ENCODE measurements at regions of chr2 and their contacts with region 1.

Region 1: GRCh38 chr2:106582148-106583143 is 95.3 kb downstream of the CD8B2 start:
- DNase-seq: peak; percentile 66
- ATAC-seq: peak; percentile 99
- H3K4me3 ChIP-seq: peak overlapping the region; percentile 43 to 52
- H3K27ac ChIP-seq: no peak overlapping the region
- H3K4me1 ChIP-seq: peaks cover 3 to 11% of the 10 kb centered on the region in 2 experiments; a peak in 3 of 4 replicates
- H3K27me3 ChIP-seq: 0 out of 2 replicates have a peak, but pooled peaks cover 5% of the 10 kb centered on the region
- CTCF ChIP-seq: peak; percentile 78 to 90 (median 84)
- POLR2A ChIP-seq: no peak
- RAD21 ChIP-seq: peak; percentile 89

Region 2: GRCh38 chr2:105287692-105288091 is 1294.8 kb before region 1 on chr2:
- CTCF ChIA-PET with region 1: no interaction called
- POLR2A ChIA-PET with region 1: no interaction called
- RAD21 ChIA-PET with region 1: no interaction called
- intact Hi-C with region 1: loop called (anchors 5 kb)
- DNase-seq: peak; percentile 16
- ATAC-seq: peak; percentile 74
- H3K4me3 ChIP-seq: no peak overlapping the region
- H3K27ac ChIP-seq: no peak overlapping the region
- H3K4me1 ChIP-seq: no peaks in the 10 kb centered on the region
- H3K27me3 ChIP-seq: no peaks in the 10 kb centered on the region
- CTCF ChIP-seq: peak; percentile 42 to 65 (median 61); a peak in 5 of 6 replicates
- POLR2A ChIP-seq: no peak
- RAD21 ChIP-seq: peak; percentile 51

Region 3: GRCh38 chr2:105919826-105920225 is 662.6 kb before region 1 on chr2:
- CTCF ChIA-PET with region 1: no interaction called
- POLR2A ChIA-PET with region 1: no interaction called
- RAD21 ChIA-PET with region 1: interaction called in 1 of 2 experiments, 4 read pairs
- intact Hi-C with region 1: loop called (anchors 10 kb)
- DNase-seq: peak; percentile 62
- ATAC-seq: peak; percentile 64
- H3K4me3 ChIP-seq: peak overlapping the region in 1 of 2 experiments; percentile 32; a peak in 1 of 4 replicates
- H3K27ac ChIP-seq: peak overlapping the region; percentile 76
- H3K4me1 ChIP-seq: peaks cover 21 to 39% of the 10 kb centered on the region in 2 experiments
- H3K27me3 ChIP-seq: no peaks in the 10 kb centered on the region
- CTCF ChIP-seq: peak; percentile 44 to 87 (median 85); a peak in 5 of 6 replicates
- POLR2A ChIP-seq: no peak
- RAD21 ChIP-seq: peak; percentile 46

Region 4: DNA sequence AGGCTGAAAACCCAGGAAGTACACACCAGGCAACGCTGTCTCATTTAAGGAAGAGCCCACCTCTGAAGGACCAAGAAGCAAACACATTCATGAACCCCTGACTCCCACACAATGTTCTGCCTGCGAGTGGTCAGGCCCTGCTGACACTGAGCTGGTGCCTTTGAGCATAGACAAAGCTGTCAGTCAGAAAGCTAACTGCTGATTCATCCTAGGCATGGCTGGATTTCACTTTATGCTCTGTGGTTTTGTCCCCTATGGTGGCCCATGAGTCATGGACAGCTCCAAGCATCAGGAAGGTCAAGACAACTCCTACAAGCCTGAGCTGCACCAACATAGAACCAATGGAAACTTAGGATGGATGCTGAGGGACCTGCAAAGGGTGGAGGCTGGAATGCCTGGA is 467.2 kb before region 1 on chr2:
- CTCF ChIA-PET with region 1: no interaction called
- POLR2A ChIA-PET with region 1: no interaction called
- RAD21 ChIA-PET with region 1: no interaction called
- intact Hi-C with region 1: loop called (anchors 5 kb)
- DNase-seq: peak; percentile 86
- ATAC-seq: peak; percentile 92
- H3K4me3 ChIP-seq: peak overlapping the region in 1 of 2 experiments; percentile 20; a peak in 1 of 4 replicates
- H3K27ac ChIP-seq: peak overlapping the region; percentile 32; the same call in 1 of the 2 replicates
- H3K4me1 ChIP-seq: peaks cover 15 to 54% of the 10 kb centered on the region in 2 experiments
- H3K27me3 ChIP-seq: no peaks in the 10 kb centered on the region
- CTCF ChIP-seq: no peak
- POLR2A ChIP-seq: no peak
- RAD21 ChIP-seq: no peak; the same call in 1 of the 2 replicates

Region 5: DNA sequence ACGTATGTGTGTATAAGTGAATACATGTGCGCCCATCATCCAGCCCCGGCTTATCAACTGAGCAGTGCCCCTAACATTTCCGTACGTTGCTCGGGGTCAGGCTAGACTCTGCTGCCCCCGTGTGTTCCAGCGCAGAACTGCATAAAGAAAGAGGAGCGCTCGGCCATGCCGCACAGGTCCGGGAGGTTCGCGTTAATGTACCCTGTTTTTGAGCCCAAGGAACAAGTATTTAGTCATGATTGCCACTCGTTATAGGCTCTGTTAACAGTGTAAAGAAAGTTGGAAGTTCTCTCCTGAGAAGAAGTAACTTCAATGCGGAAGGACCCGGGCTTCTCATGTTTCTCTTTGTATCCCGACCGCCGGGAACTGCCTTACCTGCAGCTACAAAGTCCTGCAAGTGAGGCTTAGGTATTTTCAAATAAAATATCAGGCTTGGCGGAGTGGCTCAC is 39.6 kb before region 1 on chr2:
- CTCF ChIA-PET with region 1: interaction called, 23 read pairs
- POLR2A ChIA-PET with region 1: interaction called, 3 read pairs
- RAD21 ChIA-PET with region 1: interaction called, 6 to 7 read pairs
- intact Hi-C with region 1: no loop called
- DNase-seq: peak; percentile 55
- ATAC-seq: peak; percentile 97
- H3K4me3 ChIP-seq: peak overlapping the region; percentile 38 to 55
- H3K27ac ChIP-seq: peak overlapping the region; percentile 46; the same call in 1 of the 2 replicates
- H3K4me1 ChIP-seq: peaks cover 0 to 4% of the 10 kb centered on the region in 2 experiments; a peak in 1 of 4 replicates
- H3K27me3 ChIP-seq: no peaks in the 10 kb centered on the region
- CTCF ChIP-seq: peak; percentile 74 to 87 (median 79); a peak in 5 of 6 replicates
- POLR2A ChIP-seq: no peak
- RAD21 ChIP-seq: peak; percentile 85

Region 6: DNA sequence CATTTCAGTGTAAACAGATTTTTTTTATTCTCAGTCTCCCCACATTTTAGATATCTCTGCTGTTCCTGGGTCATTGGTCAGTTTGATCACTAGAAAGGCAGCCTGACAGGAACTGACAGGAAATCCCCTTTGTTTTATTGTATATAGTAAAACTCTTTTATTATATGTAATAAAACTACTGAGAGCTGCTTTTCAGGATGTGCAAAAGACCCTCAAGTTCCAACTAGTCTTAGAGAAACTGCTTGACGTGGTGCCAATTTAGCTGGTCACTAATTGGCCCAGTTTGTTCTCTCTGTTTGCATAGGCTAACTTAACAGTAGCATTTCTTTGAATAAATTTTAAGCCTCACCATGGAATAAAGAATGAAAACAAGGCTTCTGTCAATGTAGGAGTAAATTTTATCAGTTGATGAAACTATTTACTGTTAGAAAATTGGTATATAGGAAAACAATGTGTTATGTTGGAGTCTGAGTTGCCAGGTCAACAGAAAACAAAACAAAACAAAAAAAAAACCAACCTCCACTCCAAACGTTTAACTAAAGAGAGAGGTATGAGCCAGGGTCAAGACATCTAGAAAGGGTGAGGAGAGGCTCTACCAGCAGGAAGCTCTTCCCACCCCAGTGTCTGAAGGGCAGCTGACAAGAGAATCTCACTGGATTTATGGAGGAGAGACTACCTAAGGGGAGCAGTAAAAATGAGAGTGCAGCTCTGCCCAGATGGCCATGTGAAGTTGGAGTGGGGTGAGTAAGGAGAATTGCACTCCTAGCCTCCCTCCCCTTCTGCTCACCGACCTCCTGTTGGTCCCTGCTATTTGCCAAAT is 119.0 kb after region 1 on chr2:
- CTCF ChIA-PET with region 1: no interaction called
- POLR2A ChIA-PET with region 1: no interaction called
- RAD21 ChIA-PET with region 1: no interaction called
- intact Hi-C with region 1: no loop called
- DNase-seq: no peak
- ATAC-seq: no peak
- H3K4me3 ChIP-seq: no peak overlapping the region
- H3K27ac ChIP-seq: no peak overlapping the region
- H3K4me1 ChIP-seq: no peaks in the 10 kb centered on the region
- H3K27me3 ChIP-seq: no peaks in the 10 kb centered on the region
- CTCF ChIP-seq: no peak
- POLR2A ChIP-seq: no peak
- RAD21 ChIP-seq: no peak